ENCODE measurements at regions of chr3 and their contacts with region 1.

Region 1: DNA sequence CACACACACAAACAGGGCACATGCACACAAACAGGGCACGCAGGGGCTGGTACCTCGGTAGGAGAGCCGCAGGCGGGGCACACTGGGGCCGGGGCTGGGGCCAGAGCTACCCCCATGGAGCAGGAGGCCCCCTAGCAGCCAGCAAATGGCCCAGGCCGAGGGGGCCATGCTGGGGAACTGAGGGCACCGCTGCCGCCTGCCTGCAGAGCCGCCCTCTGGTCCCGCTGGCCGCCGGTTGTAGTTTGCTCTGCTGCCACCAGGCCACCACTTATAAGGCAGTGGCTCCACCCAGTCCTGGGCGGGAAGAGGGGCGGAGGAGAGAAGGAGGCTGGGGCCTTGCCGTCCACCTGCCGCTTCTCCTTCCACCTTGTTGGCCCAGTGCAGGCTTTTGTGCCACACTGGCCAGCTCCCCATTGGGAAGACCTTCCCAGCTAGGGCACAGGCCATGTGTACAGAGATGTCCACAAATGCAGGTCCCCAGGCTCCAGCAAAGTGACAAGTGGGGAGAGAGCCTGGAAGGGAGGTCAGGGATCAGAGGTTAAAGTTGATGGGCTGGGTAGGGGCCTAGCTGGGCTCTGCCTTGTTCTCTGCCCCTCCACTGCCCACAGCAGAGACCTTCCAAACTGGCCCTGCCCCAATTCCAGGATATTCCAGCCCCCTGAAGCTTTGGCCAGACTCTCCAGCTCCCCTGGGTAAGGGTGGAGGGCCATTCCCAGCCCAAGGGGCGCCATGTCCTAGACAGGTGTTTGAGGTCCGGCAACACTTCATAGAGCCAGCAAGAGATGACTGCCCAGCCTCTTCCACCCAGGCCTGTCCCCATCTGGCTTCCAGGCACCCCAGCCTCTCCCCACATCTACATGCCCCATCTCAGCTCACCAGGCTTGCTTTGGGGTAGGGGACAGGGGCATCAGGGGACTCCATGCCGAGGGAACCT is at the start of gene SEMA3G:
- DNase-seq: peak; percentile 85
- CTCF ChIP-seq: peak; percentile 39

Region 2: DNA sequence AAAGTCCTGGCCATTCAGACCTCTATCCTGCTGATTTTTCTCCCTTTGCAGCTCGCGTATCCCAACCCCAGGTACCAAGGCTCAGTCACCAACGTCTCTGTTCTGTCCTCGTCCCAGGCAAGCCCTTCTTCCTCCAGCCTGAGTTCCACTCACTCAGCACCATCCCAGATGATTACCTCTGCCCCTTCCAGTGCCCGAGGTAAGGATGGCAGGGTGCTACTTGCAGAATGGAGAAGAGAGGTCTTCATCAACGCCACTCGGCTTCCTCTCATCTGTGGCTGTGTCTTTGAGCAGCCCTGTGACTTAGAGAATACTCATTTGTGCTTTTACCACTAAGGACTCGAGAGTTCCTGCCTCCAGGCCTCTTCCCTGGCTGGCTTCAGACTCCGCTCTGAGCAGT is 1082.7 kb before region 1 on chr3:
- CTCF ChIA-PET with region 1: no interaction called
- POLR2A ChIA-PET with region 1: no interaction called
- DNase-seq: no peak
- CTCF ChIP-seq: no peak

Region 3: GRCh38 chr3:52022323-52023100 is 422.6 kb before region 1 on chr3:
- CTCF ChIA-PET with region 1: no interaction called
- POLR2A ChIA-PET with region 1: no interaction called
- DNase-seq: no peak
- CTCF ChIP-seq: no peak

Region 4: DNA sequence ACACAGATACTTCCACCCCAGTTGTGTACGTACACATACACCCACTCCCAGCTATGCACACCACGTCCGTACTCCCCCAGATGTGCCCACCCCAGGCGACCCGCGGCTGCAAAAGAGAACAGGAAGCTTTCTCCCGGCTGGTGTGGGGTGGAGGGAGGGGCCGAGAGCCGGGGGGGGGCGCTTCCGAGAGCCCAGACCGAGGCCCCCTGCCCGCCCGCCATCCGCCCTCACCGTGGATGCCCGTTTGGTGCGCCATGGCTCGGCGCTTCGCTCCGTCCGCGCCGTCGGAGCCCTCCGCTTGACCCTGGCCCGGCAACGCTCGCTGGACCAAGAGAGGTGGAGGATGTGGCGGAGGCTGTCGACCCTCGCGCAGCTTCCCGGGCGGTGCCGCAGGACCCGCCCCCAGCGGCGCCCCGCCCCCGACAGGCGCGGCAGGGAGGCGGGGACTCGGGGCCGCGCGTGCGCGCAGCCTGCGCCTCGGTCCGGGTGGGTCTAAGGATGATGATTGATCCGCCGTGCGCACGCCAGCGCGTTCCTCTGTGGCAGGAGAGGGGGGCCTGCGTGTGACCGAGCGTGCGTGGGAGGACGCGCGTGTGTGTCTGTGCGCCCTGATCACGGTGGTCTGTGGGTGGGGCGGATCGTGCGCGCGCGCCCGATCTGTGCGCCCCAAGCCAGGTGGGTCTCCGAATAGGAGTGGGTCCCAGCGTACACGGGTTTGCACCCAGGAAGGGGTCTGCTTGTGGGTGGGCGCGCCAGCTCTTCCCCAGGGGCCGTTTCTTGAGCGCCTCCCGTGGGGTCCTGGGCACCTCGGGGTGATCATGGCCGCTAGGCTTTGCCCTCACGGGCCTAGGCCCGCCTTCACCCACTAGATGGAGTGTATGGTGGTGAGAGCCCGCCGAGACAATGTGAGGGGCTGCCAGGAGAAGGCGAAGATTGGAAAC is 206.1 kb before region 1 on chr3 and contains the start of gene TWF2:
- CTCF ChIA-PET with region 1: interaction called, 10 read pairs
- POLR2A ChIA-PET with region 1: no interaction called
- DNase-seq: peak; percentile 97
- CTCF ChIP-seq: peak; percentile 44

Region 5: GRCh38 chr3:52291508-52292181 is 153.5 kb before region 1 on chr3:
- CTCF ChIA-PET with region 1: interaction called, 24 read pairs
- POLR2A ChIA-PET with region 1: no interaction called
- DNase-seq: peak; percentile 76
- CTCF ChIP-seq: peak; percentile 64

Region 6: GRCh38 chr3:52428151-52429005 is 16.7 kb before region 1 on chr3:
- CTCF ChIA-PET with region 1: interaction called, 345 read pairs
- POLR2A ChIA-PET with region 1: no interaction called
- DNase-seq: peak; percentile 60
- CTCF ChIP-seq: peak; percentile 81

Region 7: GRCh38 chr3:52455283-52456168 is 10.4 kb after region 1 on chr3 and contains the start of gene NISCH:
- CTCF ChIA-PET with region 1: interaction called, 60 read pairs
- POLR2A ChIA-PET with region 1: no interaction called
- DNase-seq: peak; percentile 98
- CTCF ChIP-seq: no peak